ENCODE measurements at regions of chr3 and their contacts with region 1.

Region 1: GRCh38 chr3:47347217-47347801 is 33.5 kb upstream of the PTPN23 start:
- DNase-seq: no peak
- H3K4me3 ChIP-seq: no peak overlapping the region
- H3K27ac ChIP-seq: no peak overlapping the region
- H3K27me3 ChIP-seq: no peaks in the 10 kb centered on the region
- CTCF ChIP-seq: no peak

Region 2: GRCh38 chr3:46663591-46664135 is 683.6 kb before region 1 on chr3:
- intact Hi-C with region 1: no loop called
- DNase-seq: peak in 5 of 10 donors; percentile 9 to 42 (median 22)
- H3K4me3 ChIP-seq: no peak overlapping the region
- H3K27ac ChIP-seq: peak overlapping the region in 55 of 59 donors; percentile 28 to 91 (median 76)
- H3K27me3 ChIP-seq: no peaks in the 10 kb centered on the region
- CTCF ChIP-seq: peak in 9 of 56 donors; percentile 7 to 28 (median 12)

Region 3: DNA sequence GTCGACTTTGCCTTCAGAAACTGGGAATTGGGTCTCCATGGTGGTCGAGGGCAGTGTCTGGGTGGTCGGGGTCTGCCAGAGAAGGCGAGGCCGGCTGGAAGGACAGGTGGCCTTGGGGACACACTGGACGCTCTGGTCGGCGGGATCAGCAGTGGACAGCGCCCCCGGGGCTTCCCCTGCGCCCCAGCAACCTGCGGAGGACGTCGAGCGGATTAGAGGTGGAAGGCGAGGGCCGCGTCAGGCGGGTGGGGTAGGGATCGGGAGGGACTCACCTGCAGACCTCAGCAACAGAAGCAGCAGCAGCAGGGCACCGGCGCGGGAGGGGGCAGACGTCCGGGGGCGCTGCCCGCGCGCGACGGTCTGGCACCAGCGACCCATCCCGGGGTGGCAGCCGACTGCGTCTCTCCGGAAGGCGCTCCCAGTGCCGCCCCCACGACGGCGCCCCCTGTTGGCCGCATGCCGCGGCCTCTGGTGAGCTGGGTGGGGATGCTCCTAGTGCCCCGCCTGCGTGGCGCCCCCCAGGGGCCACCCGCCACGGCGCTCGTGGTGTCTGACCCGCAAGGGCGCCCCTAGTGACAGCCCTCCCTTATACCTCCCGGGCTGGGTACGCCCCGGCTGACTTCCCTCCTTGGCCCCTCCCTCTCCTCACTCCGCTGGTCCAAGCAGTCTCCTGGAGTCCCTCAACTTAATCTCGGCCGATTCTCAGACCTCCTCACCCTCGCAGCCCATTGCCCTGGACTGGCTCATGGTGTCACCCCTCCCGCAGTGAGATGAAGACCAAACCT is 629.7 kb before region 1 on chr3 and contains the start of gene PRSS50:
- intact Hi-C with region 1: loop called in 1 of 2 experiments (anchors 10 kb)
- DNase-seq: peak in 4 of 10 donors; percentile 2 to 23 (median 12)
- H3K4me3 ChIP-seq: no peak within 1 kb of the TSS
- H3K27ac ChIP-seq: no peak within 1 kb of the TSS
- H3K27me3 ChIP-seq: peaks cover 0 to 20% (median 6%) of the 10 kb centered on the region in 45 donors
- CTCF ChIP-seq: peak in 6 of 56 donors; percentile 7 to 28 (median 14)
- total RNA-seq, gene PRSS50: 0.11 to 0.64 (median 0.31) TPM in 44 of 120 experiments, not detected in the others

Measured in dorsolateral prefrontal cortex (tissue), 120 donors.